PC-3 (cell line): ENCODE measurements at regions of chr5 and their contacts with region 1.

Region 1: GRCh38 chr5:104347119-104347708 is 784.6 kb upstream of the NUDT12 start:
- DNase-seq: peak; percentile 61
- ATAC-seq: no peak
- H3K4me3 ChIP-seq: no peak overlapping the region
- H3K27ac ChIP-seq: no peak overlapping the region
- H3K4me1 ChIP-seq: peaks cover 19% of the 10 kb centered on the region
- H3K27me3 ChIP-seq: no peaks in the 10 kb centered on the region
- CTCF ChIP-seq: peak; percentile 87

Region 2: DNA sequence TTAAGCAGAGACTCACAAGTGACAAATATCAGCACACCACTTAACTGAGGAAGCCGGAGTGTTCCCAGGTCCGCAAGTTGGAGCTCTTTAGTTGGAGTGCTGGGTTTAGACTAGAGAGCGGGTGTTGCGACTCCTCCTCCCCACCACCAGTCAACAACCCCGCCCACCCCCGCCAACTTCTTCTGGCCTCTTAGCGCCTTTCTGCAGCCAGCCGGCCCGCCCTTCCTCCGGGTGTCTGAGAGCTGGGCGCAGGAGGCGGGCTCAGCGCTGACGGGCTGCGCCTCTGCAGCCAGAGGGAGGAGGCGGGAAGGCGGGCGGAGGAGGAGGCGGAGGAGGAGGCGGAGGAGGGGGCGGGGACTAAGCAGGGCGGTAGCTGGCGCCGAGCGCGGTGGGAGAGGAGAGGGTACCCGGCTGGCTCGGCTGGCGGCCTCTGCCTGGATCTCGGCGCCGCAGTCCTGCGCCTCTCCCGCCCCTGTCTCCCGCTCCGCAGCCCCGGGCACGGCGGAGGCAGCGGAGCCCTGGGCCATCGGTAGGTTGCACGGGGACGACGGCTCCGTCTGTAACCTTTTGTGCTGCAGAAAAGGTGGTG is 1088.8 kb before region 1 on chr5 and contains the start of gene MACIR:
- CTCF ChIA-PET with region 1: interaction called, 11 read pairs
- POLR2A ChIA-PET with region 1: no interaction called
- intact Hi-C with region 1: no loop called
- DNase-seq: peak; percentile 99
- ATAC-seq: peak; percentile 85
- H3K4me3 ChIP-seq: peak within 1 kb of the TSS; percentile 93
- H3K27ac ChIP-seq: peak within 1 kb of the TSS; percentile 63
- H3K4me1 ChIP-seq: peaks cover 34% of the 10 kb centered on the region
- H3K27me3 ChIP-seq: no peaks in the 10 kb centered on the region
- CTCF ChIP-seq: 0 out of 2 replicates have a peak, but pooled peaks have one; percentile 9
- total RNA-seq, gene MACIR: 15.1 and 22.2 TPM in 2 replicates

Region 3: GRCh38 chr5:103942587-103943186 is 404.5 kb before region 1 on chr5:
- CTCF ChIA-PET with region 1: no interaction called
- POLR2A ChIA-PET with region 1: no interaction called
- intact Hi-C with region 1: loop called (anchors 2 kb)
- DNase-seq: peak; percentile 51
- ATAC-seq: peak; percentile 73
- H3K4me3 ChIP-seq: no peak overlapping the region
- H3K27ac ChIP-seq: no peak overlapping the region
- H3K4me1 ChIP-seq: 0 out of 2 replicates have a peak, but pooled peaks cover 4% of the 10 kb centered on the region
- H3K27me3 ChIP-seq: no peaks in the 10 kb centered on the region
- CTCF ChIP-seq: peak; percentile 74

Region 4: DNA sequence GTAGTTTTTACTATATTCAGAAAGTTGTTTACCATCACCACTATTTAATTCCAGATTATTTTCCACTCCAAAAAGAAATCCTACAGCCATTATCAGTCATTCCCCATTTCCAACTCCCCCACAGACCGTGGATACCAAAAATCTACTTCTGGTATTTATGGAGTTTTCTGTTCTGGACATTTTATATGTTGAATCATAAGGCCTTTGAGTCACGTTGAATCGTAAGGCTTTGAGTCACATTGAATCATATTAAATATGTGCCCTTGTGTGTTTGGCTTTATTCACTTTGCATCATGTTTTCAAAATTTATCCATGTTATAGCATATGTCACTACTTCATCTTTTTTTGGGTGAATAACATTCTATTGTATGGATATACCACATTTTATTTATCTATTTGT is 330.6 kb before region 1 on chr5:
- CTCF ChIA-PET with region 1: no interaction called
- POLR2A ChIA-PET with region 1: no interaction called
- intact Hi-C with region 1: no loop called
- DNase-seq: peak; percentile 90
- ATAC-seq: peak; percentile 93
- H3K4me3 ChIP-seq: no peak overlapping the region
- H3K27ac ChIP-seq: peak overlapping the region; percentile 9
- H3K4me1 ChIP-seq: peaks cover 19% of the 10 kb centered on the region
- H3K27me3 ChIP-seq: no peaks in the 10 kb centered on the region
- CTCF ChIP-seq: no peak

Region 5: DNA sequence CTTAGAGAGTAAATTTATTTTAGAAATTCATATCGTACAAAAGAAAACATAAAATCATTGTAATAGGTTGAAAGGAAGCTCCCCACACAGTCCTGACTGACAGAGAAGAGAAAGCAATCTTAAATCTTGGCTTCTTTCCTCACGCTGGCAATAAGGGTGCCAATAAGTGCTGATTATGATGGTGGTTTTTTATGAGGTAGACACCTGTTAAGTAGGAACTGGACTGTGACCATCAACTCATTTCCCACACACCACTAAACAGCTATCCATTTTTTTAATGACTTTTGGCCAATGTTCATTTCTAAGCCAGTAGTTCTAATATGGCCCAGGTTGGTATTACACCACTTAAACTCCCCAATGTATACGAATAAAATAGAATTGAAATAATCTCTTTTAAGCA is 108.9 kb after region 1 on chr5:
- CTCF ChIA-PET with region 1: no interaction called
- POLR2A ChIA-PET with region 1: no interaction called
- intact Hi-C with region 1: no loop called
- DNase-seq: no peak
- ATAC-seq: no peak
- H3K4me3 ChIP-seq: no peak overlapping the region
- H3K27ac ChIP-seq: no peak overlapping the region
- H3K4me1 ChIP-seq: no peaks in the 10 kb centered on the region
- H3K27me3 ChIP-seq: no peaks in the 10 kb centered on the region
- CTCF ChIP-seq: no peak

Region 6: GRCh38 chr5:104513121-104513602 is 165.9 kb after region 1 on chr5:
- CTCF ChIA-PET with region 1: interaction called, 4 read pairs
- POLR2A ChIA-PET with region 1: no interaction called
- intact Hi-C with region 1: loop called (anchors 1 kb)
- DNase-seq: peak; percentile 97
- ATAC-seq: peak; percentile 94
- H3K4me3 ChIP-seq: peak overlapping the region; percentile 15; the same call in 1 of the 2 replicates
- H3K27ac ChIP-seq: peak overlapping the region; percentile 67
- H3K4me1 ChIP-seq: peaks cover 29% of the 10 kb centered on the region
- H3K27me3 ChIP-seq: no peaks in the 10 kb centered on the region
- CTCF ChIP-seq: no peak

Region 7: DNA sequence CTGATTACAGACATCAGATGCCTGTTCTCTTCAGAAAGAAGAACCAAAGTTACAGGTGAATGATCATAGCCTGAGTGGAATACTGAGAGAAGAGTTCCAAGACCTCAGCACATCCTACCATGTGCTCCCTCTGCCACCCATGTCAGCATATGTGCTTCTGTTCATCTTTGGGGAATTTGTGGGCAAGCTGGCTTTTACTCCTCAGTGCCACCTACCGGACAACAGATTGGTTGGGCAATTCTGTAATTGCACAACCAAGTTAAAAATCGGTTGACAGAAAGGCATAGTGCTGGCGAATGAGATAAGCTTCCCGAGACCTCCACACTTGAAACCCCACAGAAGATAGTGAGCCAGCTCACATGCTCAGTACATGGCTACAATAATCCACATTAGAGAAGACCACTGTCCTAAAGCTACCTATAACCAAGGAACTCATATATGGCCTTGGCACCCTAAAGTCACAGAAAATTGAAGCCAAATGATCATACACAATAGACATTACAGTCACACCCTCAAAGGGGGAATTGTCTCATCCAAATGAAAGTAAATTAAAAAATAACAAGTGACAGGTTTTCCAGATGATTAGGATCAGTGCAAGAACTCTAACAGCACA is 453.3 kb after region 1 on chr5:
- CTCF ChIA-PET with region 1: no interaction called
- POLR2A ChIA-PET with region 1: no interaction called
- intact Hi-C with region 1: loop called (anchors 5 kb)
- DNase-seq: peak; percentile 67
- ATAC-seq: no peak
- H3K4me3 ChIP-seq: no peak overlapping the region
- H3K27ac ChIP-seq: no peak overlapping the region
- H3K4me1 ChIP-seq: 0 out of 2 replicates have a peak, but pooled peaks cover 5% of the 10 kb centered on the region
- H3K27me3 ChIP-seq: no peaks in the 10 kb centered on the region
- CTCF ChIP-seq: peak; percentile 88

Region 8: DNA sequence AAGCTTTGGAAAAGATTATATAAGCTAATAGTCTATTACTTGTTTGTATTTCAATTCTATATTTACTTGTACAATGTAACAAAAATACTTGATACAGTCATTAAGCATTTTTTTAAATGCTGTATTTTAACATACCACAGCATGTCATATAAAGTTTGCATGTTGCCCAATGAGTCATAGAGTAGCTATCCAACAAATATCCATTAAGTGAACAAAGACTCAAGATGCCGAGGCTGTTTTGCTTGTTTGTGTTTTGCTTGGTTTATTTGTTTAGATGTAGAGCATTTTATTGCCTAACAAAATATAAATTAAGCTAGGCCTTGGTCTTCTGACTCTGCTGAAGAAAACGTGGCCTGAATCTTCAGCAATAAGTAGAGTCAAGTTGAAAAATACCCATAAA is 799.7 kb after region 1 on chr5:
- CTCF ChIA-PET with region 1: no interaction called
- POLR2A ChIA-PET with region 1: no interaction called
- intact Hi-C with region 1: loop called (anchors 10 kb)
- DNase-seq: peak; percentile 66
- ATAC-seq: peak; percentile 90
- H3K4me3 ChIP-seq: no peak overlapping the region
- H3K27ac ChIP-seq: no peak overlapping the region
- H3K4me1 ChIP-seq: peaks cover 9% of the 10 kb centered on the region; the same call in 1 of the 2 replicates
- H3K27me3 ChIP-seq: no peaks in the 10 kb centered on the region
- CTCF ChIP-seq: no peak